WTC11 (cell line): ENCODE measurements at regions of chr6 and their contacts with region 1.

Region 1: GRCh38 chr6:168319274-168320111 is at the start of gene DACT2:
- DNase-seq: no peak
- ATAC-seq: peak; percentile 68
- H3K4me3 Mint-ChIP-seq: peak within 1 kb of the TSS; percentile 73
- H3K27ac Mint-ChIP-seq: no peak within 1 kb of the TSS
- H3K4me1 Mint-ChIP-seq: peaks cover 25% of the 10 kb centered on the region
- H3K27me3 Mint-ChIP-seq: peaks cover 39% of the 10 kb centered on the region
- CTCF ChIP-seq: no peak
- total RNA-seq, gene DACT2: 3.4 to 4.9 TPM (median 3.8 TPM) in 3 replicates

Region 2: DNA sequence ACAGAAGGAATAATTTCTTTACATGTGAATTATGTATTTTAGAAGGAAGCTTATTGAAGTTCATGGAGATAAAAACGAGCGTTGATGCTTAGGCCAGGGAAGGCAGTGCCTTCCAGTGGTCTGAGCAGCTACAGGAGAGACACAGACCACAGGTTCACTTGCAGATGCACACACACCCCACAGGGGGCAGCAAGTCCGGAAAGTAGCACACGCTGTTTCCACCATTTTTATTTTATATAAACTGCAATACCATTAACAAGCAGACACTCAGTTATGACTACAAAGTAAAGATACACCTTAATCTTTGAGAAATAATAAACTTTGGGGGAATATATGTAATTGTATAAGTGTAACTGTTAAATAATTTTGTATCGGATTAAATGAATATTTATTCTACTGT is 13.5 kb after region 1 on chr6:
- CTCF ChIA-PET with region 1: interaction called, 11 read pairs
- POLR2A ChIA-PET with region 1: no interaction called
- DNase-seq: no peak
- ATAC-seq: peak; percentile 43
- H3K4me3 Mint-ChIP-seq: no peak overlapping the region
- H3K27ac Mint-ChIP-seq: no peak overlapping the region; the same call in 1 of the 2 replicates
- H3K4me1 Mint-ChIP-seq: peaks cover 23% of the 10 kb centered on the region
- H3K27me3 Mint-ChIP-seq: peaks cover 10% of the 10 kb centered on the region
- CTCF ChIP-seq: peak; percentile 31; the same call in 1 of the 2 replicates